ENCODE measurements at regions of chr5 and their contacts with region 1.

Region 1: DNA sequence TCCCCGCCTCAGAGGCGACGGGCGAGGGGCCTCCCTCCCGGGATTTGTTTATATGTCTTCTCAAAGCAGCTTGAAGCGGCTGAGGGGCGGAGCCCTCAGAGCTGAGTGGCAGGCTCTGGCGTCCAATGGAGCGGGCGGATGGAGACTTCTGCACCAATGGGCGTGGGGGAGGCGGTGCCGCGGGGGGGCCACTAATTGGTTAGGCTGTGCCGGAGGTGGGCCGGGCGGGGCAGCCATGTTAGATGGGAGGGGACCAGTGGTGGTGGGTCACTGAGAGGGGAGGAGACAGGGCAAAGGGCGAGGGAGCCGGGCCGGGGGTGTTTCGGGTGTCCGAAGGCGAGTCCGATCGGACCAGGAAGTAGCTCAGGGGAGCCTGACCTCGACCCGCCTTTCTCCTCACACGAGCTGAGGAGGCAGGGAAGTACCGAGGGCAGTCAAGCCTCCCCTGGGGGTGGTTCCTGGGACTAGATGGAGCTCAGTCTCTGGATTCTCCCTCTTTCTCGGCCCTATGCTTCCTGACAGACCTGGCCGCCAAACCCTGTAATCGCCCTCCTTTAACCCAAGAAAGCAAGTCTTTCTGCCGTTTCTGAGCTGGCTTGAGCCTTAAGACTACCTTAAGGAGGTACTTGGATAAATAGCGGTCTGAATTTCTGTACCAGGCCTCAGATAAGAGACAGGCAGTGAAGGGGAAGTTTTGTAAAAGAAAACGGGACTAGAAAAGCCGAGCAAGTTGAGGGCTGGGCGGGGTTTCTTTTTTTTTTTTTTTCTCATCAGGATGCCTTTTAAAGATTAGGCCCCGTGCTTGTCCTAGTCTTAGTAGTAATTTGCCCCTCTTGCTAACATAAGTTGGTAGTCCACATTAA is 1.1 kb downstream of the CREBRF start:
- DNase-seq: peak; percentile 98 to 99 (median 98)
- ATAC-seq: peak; percentile 95
- H3K4me3 ChIP-seq: peak overlapping the region; percentile 99
- H3K27ac ChIP-seq: peak overlapping the region; percentile 96
- H3K4me1 ChIP-seq: peaks cover 10% of the 10 kb centered on the region in 2 experiments; a peak in 3 of 5 replicates
- H3K27me3 ChIP-seq: no peaks in the 10 kb centered on the region
- CTCF ChIP-seq: peak in 1 of 3 experiments; percentile 2; a peak in 1 of 6 replicates
- EP300 ChIP-seq: no peak; the same call in 1 of the 2 replicates
- POLR2A ChIP-seq: peak; percentile 77
- RAD21 ChIP-seq: peak in 1 of 2 experiments; percentile 22; a peak in 2 of 4 replicates

Region 2: GRCh38 chr5:172969921-172970320 is 87.4 kb before region 1 on chr5:
- CTCF ChIA-PET with region 1: no interaction called
- POLR2A ChIA-PET with region 1: no interaction called
- in situ Hi-C with region 1: no loop called
- intact Hi-C with region 1: no loop called
- DNase-seq: no peak
- ATAC-seq: no peak
- H3K4me3 ChIP-seq: no peak overlapping the region
- H3K27ac ChIP-seq: no peak overlapping the region
- H3K4me1 ChIP-seq: peaks cover 0 to 13% of the 10 kb centered on the region in 2 experiments; a peak in 2 of 5 replicates
- H3K27me3 ChIP-seq: no peaks in the 10 kb centered on the region
- CTCF ChIP-seq: no peak
- EP300 ChIP-seq: no peak
- POLR2A ChIP-seq: no peak
- RAD21 ChIP-seq: no peak

Region 3: DNA sequence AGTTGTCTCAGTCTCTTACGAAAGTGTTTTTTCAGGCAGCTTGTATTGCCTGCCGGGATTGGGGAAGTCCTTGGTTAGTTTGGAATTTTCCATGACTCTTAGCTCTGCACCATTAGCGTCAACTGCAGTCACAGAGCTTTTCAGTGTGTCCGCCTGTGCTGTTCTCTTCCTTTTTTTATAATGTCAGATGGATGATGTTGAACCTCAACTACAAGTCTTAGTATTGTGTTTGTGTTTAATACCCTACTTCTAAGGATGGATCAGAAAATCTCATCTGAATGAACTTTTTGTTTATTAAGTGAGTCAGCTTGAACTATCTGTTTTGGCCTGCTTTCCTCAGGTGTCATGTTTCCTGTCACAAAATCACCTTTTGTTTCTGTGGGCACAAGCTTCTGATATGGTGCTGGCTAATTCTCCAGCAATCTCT is 40.7 kb before region 1 on chr5:
- CTCF ChIA-PET with region 1: no interaction called
- POLR2A ChIA-PET with region 1: interaction called, 5 read pairs
- in situ Hi-C with region 1: no loop called
- intact Hi-C with region 1: loop called (anchors 2 kb)
- DNase-seq: no peak
- ATAC-seq: no peak
- H3K4me3 ChIP-seq: no peak overlapping the region
- H3K27ac ChIP-seq: peak overlapping the region; percentile 34; the same call in 1 of the 3 replicates
- H3K4me1 ChIP-seq: peaks cover 5 to 20% of the 10 kb centered on the region in 2 experiments; a peak in 4 of 5 replicates
- H3K27me3 ChIP-seq: no peaks in the 10 kb centered on the region
- CTCF ChIP-seq: no peak
- EP300 ChIP-seq: no peak
- POLR2A ChIP-seq: no peak
- RAD21 ChIP-seq: no peak

Region 4: GRCh38 chr5:173144200-173145176 is 87.2 kb after region 1 on chr5 and contains the start of gene BNIP1:
- CTCF ChIA-PET with region 1: no interaction called
- POLR2A ChIA-PET with region 1: no interaction called
- in situ Hi-C with region 1: no loop called
- intact Hi-C with region 1: loop called (anchors 1 kb)
- DNase-seq: peak; percentile 93 to 96 (median 96)
- ATAC-seq: peak; percentile 97
- H3K4me3 ChIP-seq: peak within 1 kb of the TSS; percentile 66
- H3K27ac ChIP-seq: peak within 1 kb of the TSS; percentile 84
- H3K4me1 ChIP-seq: peaks cover 7 to 12% of the 10 kb centered on the region in 2 experiments; a peak in 3 of 5 replicates
- H3K27me3 ChIP-seq: no peaks in the 10 kb centered on the region
- CTCF ChIP-seq: peak; percentile 88 to 96 (median 95)
- EP300 ChIP-seq: peak; percentile 39; the same call in 1 of the 2 replicates
- POLR2A ChIP-seq: peak; percentile 87
- RAD21 ChIP-seq: peak; percentile 41 to 62
- polyA plus RNA-seq, gene BNIP1: 54.9 to 65.0 TPM

Region 5: DNA sequence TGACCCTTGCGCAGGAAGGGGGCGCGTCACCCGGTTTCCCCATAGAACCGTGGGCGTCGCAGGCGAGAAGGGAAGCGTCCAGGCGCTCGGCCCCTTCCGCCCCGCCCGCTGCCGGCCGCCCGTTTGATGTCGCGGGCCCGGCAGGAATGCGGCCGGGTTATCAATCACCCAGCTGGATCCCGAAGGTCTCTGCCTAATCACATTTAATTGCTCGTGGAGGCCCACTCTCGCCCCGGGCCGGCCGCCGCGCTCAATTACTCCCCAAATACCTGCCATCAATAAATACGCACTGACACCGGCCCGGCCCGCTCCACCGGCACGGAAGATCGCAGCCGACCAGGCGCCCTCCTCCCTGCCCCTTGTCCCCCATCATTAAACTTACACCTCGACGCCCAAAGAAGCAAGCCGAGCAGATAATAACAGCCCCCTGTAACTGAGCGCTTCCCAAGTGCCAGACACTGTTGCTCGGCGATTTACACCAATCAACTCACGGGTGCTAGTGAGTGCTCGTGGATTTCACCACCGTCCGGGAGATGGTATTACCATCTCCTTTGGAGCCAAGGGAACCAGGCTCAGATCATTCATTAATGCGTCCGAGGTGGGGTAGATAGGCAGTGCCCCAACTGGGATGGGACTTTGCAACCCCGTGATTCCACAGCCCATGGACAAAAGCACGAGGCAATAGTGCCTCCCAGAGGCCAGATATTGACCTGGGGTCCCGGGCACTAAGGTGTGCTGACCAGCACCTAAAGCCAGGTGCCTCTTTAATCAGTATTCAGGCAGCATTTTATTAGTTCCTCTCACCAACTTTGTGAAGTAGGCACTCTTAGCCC is 1678.4 kb after region 1 on chr5:
- CTCF ChIA-PET with region 1: no interaction called
- POLR2A ChIA-PET with region 1: no interaction called
- in situ Hi-C with region 1: no loop called
- intact Hi-C with region 1: no loop called
- DNase-seq: peak in 3 of 4 experiments; percentile 17 to 40 (median 27)
- ATAC-seq: peak; percentile 72
- H3K4me3 ChIP-seq: no peak overlapping the region
- H3K27ac ChIP-seq: no peak overlapping the region
- H3K4me1 ChIP-seq: peaks cover 0 to 7% of the 10 kb centered on the region in 2 experiments; a peak in 2 of 5 replicates
- H3K27me3 ChIP-seq: peaks cover 23 to 50% of the 10 kb centered on the region in 2 experiments; a peak in 4 of 5 replicates
- CTCF ChIP-seq: peak; percentile 54 to 60 (median 55)
- EP300 ChIP-seq: no peak
- POLR2A ChIP-seq: no peak
- RAD21 ChIP-seq: peak; percentile 42 to 62